Activated T-helper 2 cell treated with anti-CD3 and anti-CD28 coated beads, Interferon-gamma antibody, Interleukin-2, Interleukin-4, amounts not matched to agents 10 μg/mL and 5 μg/mL and 100 μg/mL, durations not matched to agents 14 hours and 24 hours and 36 hours (primary cell): ENCODE measurements at regions of chr19 and their contacts with region 1.

Region 1: DNA sequence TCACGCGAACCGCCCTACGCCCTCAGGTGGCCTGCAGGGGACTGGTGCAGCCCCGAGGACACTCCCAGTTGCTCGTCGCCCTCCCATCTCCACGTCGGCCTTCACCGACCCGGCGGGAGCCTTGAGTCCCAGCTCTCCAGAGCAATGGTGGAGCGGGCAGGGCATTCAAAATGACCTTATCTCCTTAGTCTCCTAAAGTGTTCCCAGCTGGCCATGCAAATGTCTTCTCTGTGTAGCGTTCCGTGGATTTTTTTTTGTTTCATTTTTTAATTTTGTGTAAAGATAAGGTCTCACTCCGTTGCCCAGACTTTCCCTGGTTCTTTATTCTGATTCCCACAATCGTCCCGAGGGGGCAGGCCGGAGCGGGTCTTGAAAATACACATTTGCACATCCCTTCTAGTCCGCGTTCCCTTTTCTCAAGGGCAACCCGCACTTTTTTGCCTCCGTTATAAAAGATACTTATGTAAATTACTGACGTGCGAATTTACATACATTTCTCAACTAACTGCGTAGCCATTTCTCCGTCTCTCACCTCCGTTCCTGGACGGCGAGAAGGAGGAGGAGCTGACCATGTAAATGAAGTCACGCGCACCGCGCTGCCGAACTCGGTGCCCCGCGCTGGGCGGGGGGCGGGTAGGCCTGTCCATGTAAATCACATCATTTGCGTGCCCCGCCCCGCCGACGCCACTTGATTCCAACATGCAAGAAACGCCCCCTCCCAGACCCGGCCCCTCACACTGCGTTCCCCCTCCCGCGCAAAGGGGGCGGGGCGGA is 581 bp upstream of the EGLN2 start:
- DNase-seq: peak; percentile 100
- H3K4me3 Mint-ChIP-seq: peak overlapping the region; percentile 88
- H3K27ac Mint-ChIP-seq: peak overlapping the region; percentile 94
- H3K4me1 Mint-ChIP-seq: peaks cover 42% of the 10 kb centered on the region
- H3K27me3 Mint-ChIP-seq: no peaks in the 10 kb centered on the region

Region 2: GRCh38 chr19:39406656-39407393 is 1391.6 kb before region 1 on chr19 and contains the start of gene ZFP36:
- intact Hi-C with region 1: loop called (anchors 5 kb)
- DNase-seq: peak; percentile 82
- H3K4me3 Mint-ChIP-seq: peak within 1 kb of the TSS; percentile 97
- H3K27ac Mint-ChIP-seq: peak within 1 kb of the TSS; percentile 88
- H3K4me1 Mint-ChIP-seq: peaks cover 51% of the 10 kb centered on the region
- H3K27me3 Mint-ChIP-seq: no peaks in the 10 kb centered on the region
- total RNA-seq, gene ZFP36: 45.4 and 46.9 TPM in 2 replicates

Region 3: DNA sequence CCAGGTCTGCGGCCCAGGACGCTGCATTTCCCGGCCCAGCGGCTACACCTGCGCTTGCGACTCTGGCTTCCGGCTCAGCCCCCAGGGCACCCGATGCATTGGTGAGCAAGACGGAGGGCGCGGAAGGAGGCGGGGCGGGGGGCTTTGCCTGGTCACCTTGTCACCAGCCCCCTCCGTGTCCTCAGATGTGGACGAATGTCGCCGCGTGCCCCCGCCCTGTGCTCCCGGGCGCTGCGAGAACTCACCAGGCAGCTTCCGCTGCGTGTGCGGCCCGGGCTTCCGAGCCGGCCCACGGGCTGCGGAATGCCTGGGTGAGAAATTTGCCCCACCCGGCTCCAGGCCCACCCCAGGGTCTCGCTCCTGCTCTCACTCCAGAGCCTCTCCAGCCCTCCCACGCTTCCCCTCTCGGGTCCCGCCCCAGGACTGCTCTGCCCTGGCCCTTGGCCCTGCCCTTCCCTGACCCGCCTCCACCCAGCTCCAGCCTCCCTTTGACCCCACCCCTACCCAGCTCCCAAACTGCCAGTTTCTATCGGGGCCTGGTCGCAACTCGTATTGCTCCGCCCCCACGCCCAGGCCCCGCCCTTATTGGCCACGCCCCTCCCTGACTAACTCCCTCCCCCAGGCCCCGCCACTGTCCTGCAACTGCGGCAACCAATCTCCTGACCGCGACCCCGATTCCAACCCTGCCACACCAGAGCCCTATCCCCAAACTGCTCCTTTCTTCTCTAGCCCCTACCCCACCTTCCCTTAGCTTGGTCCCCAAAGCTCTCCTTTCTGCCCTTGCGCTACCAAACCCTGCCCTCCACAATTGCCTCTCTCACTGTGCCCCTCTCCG is 188.6 kb before region 1 on chr19:
- intact Hi-C with region 1: loop called (anchors 5 kb)
- DNase-seq: peak; percentile 87
- H3K4me3 Mint-ChIP-seq: peak overlapping the region; percentile 80
- H3K27ac Mint-ChIP-seq: peak overlapping the region; percentile 93
- H3K4me1 Mint-ChIP-seq: peaks cover 35% of the 10 kb centered on the region
- H3K27me3 Mint-ChIP-seq: no peaks in the 10 kb centered on the region

Region 4: GRCh38 chr19:40735003-40735771 is 63.2 kb before region 1 on chr19:
- intact Hi-C with region 1: no loop called
- DNase-seq: no peak
- H3K4me3 Mint-ChIP-seq: no peak overlapping the region
- H3K27ac Mint-ChIP-seq: no peak overlapping the region
- H3K4me1 Mint-ChIP-seq: peaks cover 3% of the 10 kb centered on the region
- H3K27me3 Mint-ChIP-seq: no peaks in the 10 kb centered on the region

Region 5: GRCh38 chr19:40777937-40778705 is 20.3 kb before region 1 on chr19 and contains the start of gene RAB4B:
- intact Hi-C with region 1: loop called (anchors 1 kb)
- DNase-seq: peak; percentile 100
- H3K4me3 Mint-ChIP-seq: peak within 1 kb of the TSS; percentile 96
- H3K27ac Mint-ChIP-seq: peak within 1 kb of the TSS; percentile 96
- H3K4me1 Mint-ChIP-seq: peaks cover 35% of the 10 kb centered on the region
- H3K27me3 Mint-ChIP-seq: no peaks in the 10 kb centered on the region
- total RNA-seq, gene RAB4B: 50.1 and 50.4 TPM in 2 replicates